GM12878 (cell line): ENCODE measurements at regions of chr17 and their contacts with region 1.

Region 1: GRCh38 chr17:30021708-30022317 is 80.4 kb downstream of the EFCAB5 start:
- DNase-seq: no peak
- ATAC-seq: peak; percentile 77
- H3K4me3 ChIP-seq: no peak overlapping the region
- H3K27ac ChIP-seq: no peak overlapping the region
- H3K4me1 ChIP-seq: no peaks in the 10 kb centered on the region
- H3K27me3 ChIP-seq: no peaks in the 10 kb centered on the region
- CTCF ChIP-seq: peak; percentile 71 to 75 (median 75)
- EP300 ChIP-seq: no peak
- POLR2A ChIP-seq: no peak
- RAD21 ChIP-seq: peak; percentile 82

Region 2: GRCh38 chr17:29579866-29580771 is 441.7 kb before region 1 on chr17:
- CTCF ChIA-PET with region 1: no interaction called
- POLR2A ChIA-PET with region 1: no interaction called
- RAD21 ChIA-PET with region 1: no interaction called
- SMC1A ChIA-PET with region 1: interaction called, 3 read pairs
- in situ Hi-C with region 1: no loop called
- intact Hi-C with region 1: loop called (anchors 5 kb)
- DNase-seq: no peak
- ATAC-seq: peak; percentile 100
- H3K4me3 ChIP-seq: no peak overlapping the region
- H3K27ac ChIP-seq: no peak overlapping the region; the same call in 1 of the 2 replicates
- H3K4me1 ChIP-seq: peaks cover 11% of the 10 kb centered on the region
- H3K27me3 ChIP-seq: no peaks in the 10 kb centered on the region
- CTCF ChIP-seq: peak; percentile 82 to 93 (median 89)
- EP300 ChIP-seq: no peak
- POLR2A ChIP-seq: no peak
- RAD21 ChIP-seq: peak; percentile 87

Region 3: GRCh38 chr17:29802246-29802645 is 219.6 kb before region 1 on chr17:
- CTCF ChIA-PET with region 1: interaction called, 21 read pairs
- POLR2A ChIA-PET with region 1: no interaction called
- RAD21 ChIA-PET with region 1: interaction called, 14 read pairs
- SMC1A ChIA-PET with region 1: interaction called, 53 read pairs
- in situ Hi-C with region 1: loop called (anchors 5 kb)
- intact Hi-C with region 1: loop called (anchors 1 kb)
- DNase-seq: no peak
- ATAC-seq: no peak
- H3K4me3 ChIP-seq: no peak overlapping the region
- H3K27ac ChIP-seq: no peak overlapping the region
- H3K4me1 ChIP-seq: no peaks in the 10 kb centered on the region
- H3K27me3 ChIP-seq: no peaks in the 10 kb centered on the region
- CTCF ChIP-seq: no peak
- EP300 ChIP-seq: no peak
- POLR2A ChIP-seq: no peak
- RAD21 ChIP-seq: no peak

Region 4: DNA sequence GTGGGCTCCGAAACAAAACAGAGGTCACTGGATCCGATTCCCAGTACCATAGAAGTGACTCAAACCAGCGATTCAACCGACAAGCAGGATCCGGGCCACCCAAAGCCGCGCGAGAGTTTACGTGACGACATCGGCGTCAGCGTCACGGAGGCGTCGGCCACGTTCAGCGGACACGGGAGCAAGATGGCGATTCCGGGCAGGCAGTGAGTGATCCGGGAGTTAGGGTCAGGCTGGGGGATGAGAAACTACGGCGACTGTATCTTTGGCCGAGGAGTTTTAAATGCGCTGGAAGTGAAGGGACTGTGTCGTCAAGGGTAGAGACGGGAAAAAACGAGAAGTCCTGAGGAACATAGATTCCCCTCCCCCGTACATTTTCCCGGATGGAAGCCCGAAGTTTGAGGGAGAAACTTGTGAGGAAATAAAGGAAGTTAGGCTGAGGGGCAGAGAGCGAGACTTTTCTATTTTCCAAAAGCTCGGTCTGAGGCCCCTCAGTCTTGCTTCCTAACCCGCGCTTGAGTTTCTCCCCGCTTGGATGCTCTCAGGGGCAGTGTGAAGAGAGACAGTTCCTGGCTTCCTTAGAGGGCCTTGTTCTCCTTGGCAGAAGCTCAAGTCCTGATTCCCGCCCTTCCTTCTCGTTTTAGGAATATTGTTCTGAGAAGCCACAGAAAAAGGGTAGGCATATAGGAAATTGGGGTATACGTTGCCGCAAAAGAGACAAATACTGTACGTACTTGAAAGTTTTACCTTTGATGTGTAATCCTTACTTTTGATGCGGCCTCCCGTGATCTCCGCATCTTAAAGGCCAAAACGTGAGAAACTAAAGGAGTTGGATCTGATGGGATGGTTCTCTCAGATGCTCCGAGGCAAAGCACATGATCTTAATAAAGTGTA is 95.1 kb after region 1 on chr17 and contains the start of gene NSRP1:
- CTCF ChIA-PET with region 1: no interaction called
- POLR2A ChIA-PET with region 1: no interaction called
- RAD21 ChIA-PET with region 1: no interaction called
- SMC1A ChIA-PET with region 1: no interaction called
- in situ Hi-C with region 1: no loop called
- intact Hi-C with region 1: no loop called
- DNase-seq: peak; percentile 89
- ATAC-seq: peak; percentile 91
- H3K4me3 ChIP-seq: peak within 1 kb of the TSS; percentile 95
- H3K27ac ChIP-seq: peak within 1 kb of the TSS; percentile 94
- H3K4me1 ChIP-seq: peaks cover 9% of the 10 kb centered on the region
- H3K27me3 ChIP-seq: no peaks in the 10 kb centered on the region
- CTCF ChIP-seq: no peak
- EP300 ChIP-seq: no peak
- POLR2A ChIP-seq: peak; percentile 100
- RAD21 ChIP-seq: no peak
- polyA plus RNA-seq, gene NSRP1: 57.2 to 69.7 TPM